ENCODE measurements at regions of chr13 and their contacts with region 1.

Region 1: DNA sequence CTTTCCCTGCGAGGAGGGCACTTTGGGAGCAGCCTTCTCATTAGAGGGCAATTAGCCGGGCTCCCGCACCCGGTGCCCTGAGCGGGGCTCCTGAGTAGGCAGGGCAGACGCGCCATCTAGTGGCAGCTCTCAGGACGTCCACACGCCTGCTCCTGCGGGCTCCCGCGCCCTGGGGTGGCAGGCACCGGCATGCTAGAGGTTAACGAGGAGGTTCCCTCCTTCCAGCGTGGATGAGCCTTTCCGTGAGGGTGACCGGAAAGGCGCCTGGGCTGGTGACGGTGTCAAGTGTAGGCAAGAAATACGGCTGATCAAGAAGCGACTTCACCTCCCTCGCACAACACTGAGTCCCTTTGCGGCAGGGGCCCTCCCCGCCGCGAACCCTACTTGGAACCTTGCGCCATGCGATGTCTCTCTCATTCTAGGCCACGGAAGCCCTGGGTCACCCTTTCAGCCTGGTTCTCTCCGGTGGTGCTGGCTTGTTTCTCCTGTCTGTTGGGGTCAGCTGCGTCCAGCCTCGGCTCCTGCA is 67.7 kb downstream of the ALOX5AP start:
- DNase-seq: peak; percentile 90 to 95
- ATAC-seq: peak; percentile 94 to 98 (median 97)
- H3K4me3 ChIP-seq: peak overlapping the region; percentile 58
- H3K27ac ChIP-seq: peak overlapping the region; percentile 24
- H3K4me1 ChIP-seq: peaks cover 10% of the 10 kb centered on the region
- H3K27me3 ChIP-seq: peaks cover 0 to 2% (median 0%) of the 10 kb centered on the region in 3 donors
- CTCF ChIP-seq: peak; percentile 99

Region 2: DNA sequence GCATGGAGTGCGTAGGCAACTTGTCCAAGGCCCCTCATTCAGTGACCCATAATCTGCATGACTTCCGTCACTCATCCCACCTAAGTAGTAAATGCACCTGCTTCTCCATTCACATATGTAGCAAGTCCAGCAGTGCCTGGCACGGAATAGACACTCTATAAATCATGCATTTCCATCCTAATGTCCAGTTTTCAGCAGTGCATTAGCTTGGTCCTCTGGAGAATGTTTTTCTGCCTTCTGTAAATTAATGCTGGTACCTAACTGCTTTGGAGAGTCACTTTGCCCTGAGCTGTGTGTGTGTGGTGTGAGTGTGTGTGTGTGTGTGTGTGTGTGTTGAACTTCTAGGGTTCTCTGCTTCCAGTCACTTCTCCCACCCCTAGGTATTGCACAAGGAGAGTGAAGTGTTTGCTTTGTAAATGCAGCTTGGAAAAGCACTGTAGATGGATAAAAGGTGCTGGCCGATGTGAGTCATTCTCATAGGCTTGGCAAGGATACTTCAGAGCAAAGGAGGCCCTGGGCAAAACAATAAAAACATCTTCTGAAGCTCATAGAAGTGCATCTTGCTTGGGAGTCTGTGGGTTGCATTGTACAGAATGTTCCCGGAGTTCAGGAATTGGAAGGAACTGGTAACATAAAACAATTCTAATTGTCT is 677.5 kb before region 1 on chr13:
- intact Hi-C with region 1: loop called (anchors 5 to 10 kb)
- DNase-seq: no peak
- ATAC-seq: peak in 2 of 4 donors; percentile 19 to 51
- H3K4me3 ChIP-seq: no peak overlapping the region
- H3K27ac ChIP-seq: no peak overlapping the region
- H3K4me1 ChIP-seq: no peaks in the 10 kb centered on the region
- H3K27me3 ChIP-seq: no peaks in the 10 kb centered on the region
- CTCF ChIP-seq: no peak

Region 3: GRCh38 chr13:30132623-30133553 is 670.1 kb before region 1 on chr13:
- intact Hi-C with region 1: loop called (anchors 5 to 10 kb)
- DNase-seq: peak; percentile 97
- ATAC-seq: peak; percentile 95 to 99 (median 96)
- H3K4me3 ChIP-seq: peak overlapping the region; percentile 15
- H3K27ac ChIP-seq: no peak overlapping the region
- H3K4me1 ChIP-seq: no peaks in the 10 kb centered on the region
- H3K27me3 ChIP-seq: no peaks in the 10 kb centered on the region
- CTCF ChIP-seq: peak; percentile 95

Region 4: DNA sequence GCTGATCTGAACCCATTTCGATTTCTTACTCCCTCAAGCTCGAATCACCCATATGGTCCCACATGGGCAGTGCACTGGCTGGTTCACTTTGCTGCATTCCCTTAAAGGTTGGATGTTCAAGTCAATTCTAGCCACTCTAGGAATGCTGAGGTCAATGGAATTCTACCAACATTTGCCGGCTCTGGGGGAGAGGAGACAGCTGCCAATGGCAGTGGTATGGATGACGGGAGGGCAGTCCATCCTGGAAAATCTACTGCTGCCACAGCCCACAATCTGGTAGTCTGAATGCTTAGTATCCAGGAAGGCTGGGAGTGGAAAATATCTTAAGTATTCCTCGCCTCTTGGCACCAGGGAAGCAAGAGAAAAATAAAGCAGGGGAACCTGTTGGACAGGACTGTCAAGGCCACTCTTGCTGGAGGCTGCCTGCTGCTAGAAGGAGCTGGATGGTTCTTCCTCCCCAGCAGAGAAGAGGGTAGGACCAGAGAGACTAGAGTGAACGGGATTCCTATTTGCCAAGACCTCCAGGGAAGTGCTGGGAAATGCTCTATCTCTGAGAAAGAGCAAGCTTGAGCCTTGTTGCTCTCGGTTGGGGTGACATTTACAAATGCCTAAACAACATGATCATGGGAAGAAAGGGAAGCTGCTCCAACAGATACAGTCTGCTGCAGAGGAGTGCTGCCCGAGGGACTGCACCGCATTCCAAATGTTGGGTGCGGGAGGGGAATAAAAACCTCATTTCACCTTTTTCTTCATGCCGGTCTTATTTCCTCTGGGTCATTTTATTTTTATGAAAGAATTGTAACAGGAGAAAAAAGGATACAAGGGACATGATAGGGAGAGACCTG is 316.6 kb before region 1 on chr13:
- intact Hi-C with region 1: loop called in 1 of 2 experiments (anchors 10 kb)
- DNase-seq: no peak
- ATAC-seq: peak in 1 of 4 donors; percentile 46
- H3K4me3 ChIP-seq: no peak overlapping the region
- H3K27ac ChIP-seq: no peak overlapping the region
- H3K4me1 ChIP-seq: peaks cover 10% of the 10 kb centered on the region
- H3K27me3 ChIP-seq: no peaks in the 10 kb centered on the region
- CTCF ChIP-seq: no peak

Region 5: DNA sequence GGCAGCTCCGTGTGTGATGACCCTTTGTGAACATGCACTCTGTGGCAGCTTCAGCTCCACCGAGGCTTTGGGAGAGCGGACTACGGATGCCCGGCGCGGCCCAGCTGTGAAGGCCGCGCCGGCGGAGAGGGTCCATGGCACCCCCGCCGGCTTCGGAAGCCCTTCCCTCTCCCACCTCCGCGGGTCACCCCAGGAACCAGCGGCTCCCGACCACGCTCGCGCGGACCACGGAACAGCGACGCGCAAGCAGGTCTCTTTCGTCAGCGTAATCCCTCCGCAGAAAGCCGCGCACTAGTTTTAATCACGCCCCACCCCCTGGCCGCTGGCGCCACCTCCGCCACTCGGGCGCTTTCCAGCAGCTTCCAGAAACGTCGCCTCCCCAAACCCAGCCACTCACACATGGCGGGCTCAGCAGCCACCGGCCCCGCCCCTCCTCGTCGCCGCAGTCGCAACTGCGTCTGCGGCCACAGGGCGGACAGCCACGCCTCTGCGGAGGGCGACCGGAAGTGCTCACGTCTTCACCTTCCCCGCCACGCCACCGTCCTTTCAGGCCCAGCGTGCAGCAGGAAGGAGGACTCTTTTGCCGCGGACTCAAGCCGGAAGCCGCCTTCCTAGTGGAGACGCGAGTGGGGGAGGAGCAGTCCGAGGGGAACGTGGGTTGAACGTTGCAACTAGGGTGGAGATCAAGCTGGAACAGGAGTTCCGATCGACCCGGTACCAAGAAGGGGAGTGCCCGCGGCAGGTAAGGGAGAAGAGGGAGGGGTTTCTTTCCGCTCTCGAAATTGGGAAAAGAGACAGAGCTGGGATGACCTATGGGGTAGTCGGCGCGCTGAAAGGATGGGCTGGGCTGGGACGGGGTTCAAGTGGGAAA is 185.5 kb before region 1 on chr13 and contains the start of gene USPL1:
- intact Hi-C with region 1: loop called in 1 of 2 experiments (anchors 5 kb)
- DNase-seq: peak; percentile 99
- ATAC-seq: peak; percentile 92 to 97 (median 94)
- H3K4me3 ChIP-seq: peak within 1 kb of the TSS; percentile 88
- H3K27ac ChIP-seq: peak within 1 kb of the TSS; percentile 98
- H3K4me1 ChIP-seq: peaks cover 30% of the 10 kb centered on the region
- H3K27me3 ChIP-seq: no peaks in the 10 kb centered on the region
- CTCF ChIP-seq: peak; percentile 25
- total RNA-seq, gene USPL1: 11.2 to 18.4 (median 13.1) TPM

Region 6: GRCh38 chr13:30673669-30674521 is 129.1 kb before region 1 on chr13:
- intact Hi-C with region 1: loop called (anchors 2 to 5 kb)
- DNase-seq: peak; percentile 92 to 95
- ATAC-seq: peak; percentile 90 to 98 (median 97)
- H3K4me3 ChIP-seq: peak overlapping the region; percentile 71
- H3K27ac ChIP-seq: peak overlapping the region; percentile 80
- H3K4me1 ChIP-seq: no peaks in the 10 kb centered on the region
- H3K27me3 ChIP-seq: no peaks in the 10 kb centered on the region
- CTCF ChIP-seq: peak; percentile 79

Region 7: GRCh38 chr13:30829145-30829832 is 26.3 kb after region 1 on chr13:
- intact Hi-C with region 1: no loop called
- DNase-seq: no peak
- ATAC-seq: no peak
- H3K4me3 ChIP-seq: no peak overlapping the region
- H3K27ac ChIP-seq: no peak overlapping the region
- H3K4me1 ChIP-seq: no peaks in the 10 kb centered on the region
- H3K27me3 ChIP-seq: peaks cover 0 to 2% (median 0%) of the 10 kb centered on the region in 3 donors
- CTCF ChIP-seq: no peak

Region 8: GRCh38 chr13:30865123-30866049 is 62.4 kb after region 1 on chr13:
- intact Hi-C with region 1: loop called in 1 of 2 experiments (anchors 5 kb)
- DNase-seq: peak; percentile 79 to 87
- ATAC-seq: peak; percentile 76 to 80 (median 78)
- H3K4me3 ChIP-seq: no peak overlapping the region
- H3K27ac ChIP-seq: peak overlapping the region; percentile 70
- H3K4me1 ChIP-seq: peaks cover 31% of the 10 kb centered on the region
- H3K27me3 ChIP-seq: no peaks in the 10 kb centered on the region
- CTCF ChIP-seq: peak; percentile 90

Region 9: DNA sequence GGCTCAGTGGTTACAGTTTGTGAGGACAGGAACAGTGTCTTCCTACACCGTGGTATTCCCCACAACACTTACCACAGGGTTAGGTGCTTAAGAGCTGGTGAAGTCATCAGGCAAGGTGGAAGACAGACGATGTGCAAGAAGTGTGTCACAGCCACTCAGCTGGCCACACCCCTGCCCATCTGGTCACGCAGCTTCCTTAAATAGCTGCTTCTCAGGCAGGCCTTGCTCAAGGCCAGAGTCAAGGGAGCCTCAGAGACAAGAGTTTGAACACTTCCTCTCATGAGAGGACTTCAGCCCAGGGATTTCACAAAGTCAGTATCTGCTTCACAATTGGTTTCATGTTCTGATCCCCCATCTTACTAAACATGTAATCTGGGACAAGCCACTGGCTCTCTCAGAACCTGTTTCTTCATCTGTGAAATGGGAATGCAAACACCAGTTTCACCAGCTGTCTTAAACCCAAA is 1148.2 kb after region 1 on chr13:
- intact Hi-C with region 1: no loop called
- DNase-seq: peak; percentile 60 to 75
- ATAC-seq: peak; percentile 65 to 95 (median 82)
- H3K4me3 ChIP-seq: no peak overlapping the region
- H3K27ac ChIP-seq: peak overlapping the region; percentile 60
- H3K4me1 ChIP-seq: peaks cover 5% of the 10 kb centered on the region
- H3K27me3 ChIP-seq: no peaks in the 10 kb centered on the region
- CTCF ChIP-seq: no peak

Measured in psoas muscle (tissue), 8 donors.